Right ventricle myocardium inferior (tissue), 1 donor: ENCODE measurements at regions of chr20 and their contacts with region 1.

Region 1: GRCh38 chr20:20664795-20665589 is 47.5 kb downstream of the RALGAPA2 start:
- DNase-seq: no peak
- ATAC-seq: peak; percentile 76

Region 2: DNA sequence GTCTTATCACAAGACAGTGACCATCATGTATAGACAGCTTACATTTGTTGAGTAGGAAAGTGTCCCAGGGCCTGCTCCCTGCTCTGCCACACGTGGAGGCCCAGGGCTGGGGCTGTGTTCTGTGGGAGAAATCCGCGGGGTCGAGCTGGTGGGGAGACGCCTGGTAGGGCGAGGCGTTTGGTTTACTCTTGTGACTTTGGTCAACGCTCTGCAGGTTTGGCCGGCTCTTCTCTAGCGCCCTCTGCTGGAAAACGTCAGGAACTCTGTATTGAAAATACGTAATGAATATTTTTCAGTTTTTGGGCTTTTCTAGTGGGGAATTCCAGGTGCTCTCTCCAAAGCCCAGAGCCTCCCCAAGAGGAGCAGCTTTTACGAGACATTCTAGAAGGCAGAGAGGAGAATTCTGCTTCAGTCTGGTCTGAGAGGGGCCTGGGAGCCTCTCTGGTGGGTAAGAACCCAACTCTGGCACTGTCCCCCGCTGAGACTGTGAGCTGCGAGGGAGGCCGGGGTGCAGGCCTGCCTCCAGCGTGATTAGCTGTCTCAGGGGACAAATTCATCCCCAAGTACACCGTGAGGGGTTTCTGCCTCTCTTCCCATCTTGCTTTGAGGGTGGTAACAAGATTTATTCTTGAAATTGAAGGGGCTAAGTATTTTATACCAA is 160.1 kb after region 1 on chr20:
- intact Hi-C with region 1: loop called (anchors 1 kb)
- DNase-seq: peak; percentile 85
- ATAC-seq: peak; percentile 63